ENCODE measurements at regions of chr7 and their contacts with region 1.

Region 1: DNA sequence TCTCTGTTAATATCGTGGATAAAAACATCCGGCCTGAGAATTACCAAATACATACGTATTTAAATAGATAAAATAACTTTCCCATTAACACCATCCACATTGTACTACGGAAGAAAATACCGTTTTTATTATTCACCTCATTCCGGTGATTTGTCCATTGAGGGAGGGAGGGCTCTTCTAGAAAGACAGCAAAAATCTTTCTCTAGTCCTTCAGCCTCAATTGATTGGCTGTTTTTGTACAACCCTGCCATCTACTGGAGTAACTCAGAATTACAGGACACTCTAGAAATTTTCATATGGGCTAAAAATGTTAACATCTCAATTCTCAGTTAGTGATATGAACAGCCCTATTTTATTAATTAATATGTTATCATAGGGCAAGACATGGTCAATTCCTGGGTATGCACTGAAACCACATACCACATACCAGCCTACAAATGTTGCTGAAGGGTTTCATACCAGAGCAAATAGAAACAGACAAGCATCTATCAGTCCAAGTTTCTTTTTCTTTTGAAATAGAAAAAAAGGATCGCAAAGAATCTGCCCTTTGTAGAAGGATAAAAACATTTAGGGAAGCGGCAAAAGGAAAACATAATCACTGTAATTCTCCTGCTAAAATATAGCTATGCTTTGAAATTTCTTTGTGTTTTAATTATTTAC is 55.8 kb upstream of the CDCA7L start:
- DNase-seq: no peak
- ATAC-seq: peak in 3 of 4 donors; percentile 44 to 59 (median 47)
- H3K4me3 ChIP-seq: peak overlapping the region in 2 of 12 donors; percentile 1 to 20
- H3K27ac ChIP-seq: no peak overlapping the region
- H3K4me1 ChIP-seq: peaks cover 0 to 3% (median 0%) of the 10 kb centered on the region in 12 donors
- H3K27me3 ChIP-seq: peaks cover 0 to 8% (median 0%) of the 10 kb centered on the region in 9 donors
- CTCF ChIP-seq: peak; percentile 67 to 87 (median 79)
- POLR2A ChIP-seq: no peak

Region 2: GRCh38 chr7:21767300-21767900 is 234.1 kb before region 1 on chr7:
- intact Hi-C with region 1: loop called in 4 of 10 experiments (anchors 5 to 10 kb)
- DNase-seq: peak in 4 of 5 donors; percentile 15 to 47 (median 32)
- ATAC-seq: peak; percentile 66 to 94 (median 90)
- H3K4me3 ChIP-seq: no peak overlapping the region
- H3K27ac ChIP-seq: no peak overlapping the region
- H3K4me1 ChIP-seq: peaks cover 0 to 17% (median 2%) of the 10 kb centered on the region in 12 donors
- H3K27me3 ChIP-seq: peaks cover 0 to 5% (median 0%) of the 10 kb centered on the region in 9 donors
- CTCF ChIP-seq: peak in 10 of 12 donors; percentile 31 to 62 (median 47)
- POLR2A ChIP-seq: no peak

Region 3: DNA sequence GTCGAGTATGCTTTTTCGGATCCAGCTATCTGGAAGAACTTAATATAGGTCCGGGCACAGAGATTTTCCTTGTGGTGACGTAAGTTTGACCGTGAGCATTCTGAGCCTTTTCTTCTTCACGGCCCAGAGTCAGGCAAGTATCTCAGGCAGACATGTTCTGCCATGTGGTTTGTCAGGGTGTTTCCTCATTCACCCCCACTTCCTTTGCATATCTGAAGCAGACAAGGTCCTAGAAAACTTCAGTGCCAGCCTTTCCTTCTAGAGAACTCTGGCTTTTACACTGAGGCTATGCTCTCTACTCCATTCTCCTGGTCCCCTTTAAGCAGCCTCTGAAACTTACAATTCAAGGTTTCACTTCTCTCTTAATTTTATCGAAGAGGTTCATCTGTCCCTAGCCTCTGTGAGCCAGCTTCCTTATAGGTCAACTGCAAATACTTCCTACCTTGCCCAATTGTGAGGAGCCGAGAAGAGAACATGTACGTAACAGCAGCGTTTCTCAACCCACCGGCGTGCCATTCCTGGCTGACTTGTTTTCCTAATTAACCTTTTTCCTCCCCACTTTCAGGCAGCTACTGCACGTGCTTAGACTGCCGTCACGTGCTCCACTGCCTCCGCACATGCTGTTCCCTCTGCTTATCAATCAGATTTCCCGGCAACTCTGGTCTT is 103.1 kb before region 1 on chr7:
- intact Hi-C with region 1: loop called in 1 of 10 experiments (anchors 10 kb)
- DNase-seq: no peak
- ATAC-seq: peak in 3 of 4 donors; percentile 48 to 72 (median 63)
- H3K4me3 ChIP-seq: peak overlapping the region in 1 of 12 donors; percentile 27
- H3K27ac ChIP-seq: peak overlapping the region in 2 of 12 donors; percentile 38 to 71
- H3K4me1 ChIP-seq: peaks cover 0 to 20% (median 0%) of the 10 kb centered on the region in 12 donors
- H3K27me3 ChIP-seq: no peaks in the 10 kb centered on the region
- CTCF ChIP-seq: no peak
- POLR2A ChIP-seq: no peak

Region 4: GRCh38 chr7:21945454-21946227 is 55.8 kb before region 1 on chr7 and contains the start of gene CDCA7L:
- intact Hi-C with region 1: loop called in 1 of 10 experiments (anchors 5 kb)
- DNase-seq: peak; percentile 69 to 87 (median 85)
- ATAC-seq: peak; percentile 83 to 96 (median 94)
- H3K4me3 ChIP-seq: peak within 1 kb of the TSS; percentile 34 to 78 (median 70)
- H3K27ac ChIP-seq: peak within 1 kb of the TSS; percentile 6 to 92 (median 87)
- H3K4me1 ChIP-seq: peaks cover 0 to 45% (median 17%) of the 10 kb centered on the region in 12 donors
- H3K27me3 ChIP-seq: no peaks in the 10 kb centered on the region
- CTCF ChIP-seq: no peak
- POLR2A ChIP-seq: peak in 1 of 2 donors; percentile 54
- total RNA-seq, gene CDCA7L: 20.2 to 53.4 (median 45.5) TPM